Activated B cell treated with CpG ODN at 0.5 μM for 24 hours (primary cell): ENCODE measurements at regions of chr10 and their contacts with region 1.

Region 1: GRCh38 chr10:110203500-110204455 is 3.6 kb upstream of the MXI1 start:
- DNase-seq: no peak
- ATAC-seq: no peak
- H3K4me3 Mint-ChIP-seq: no peak overlapping the region
- H3K27ac Mint-ChIP-seq: no peak overlapping the region
- H3K4me1 Mint-ChIP-seq: peaks cover 11% of the 10 kb centered on the region
- H3K27me3 Mint-ChIP-seq: peaks cover 16% of the 10 kb centered on the region
- CTCF ChIP-seq: no peak

Region 2: GRCh38 chr10:109933984-109934565 is 269.7 kb before region 1 on chr10:
- CTCF ChIA-PET with region 1: no interaction called
- POLR2A ChIA-PET with region 1: interaction called, 11 read pairs
- intact Hi-C with region 1: no loop called
- DNase-seq: no peak
- ATAC-seq: no peak
- H3K4me3 Mint-ChIP-seq: no peak overlapping the region
- H3K27ac Mint-ChIP-seq: no peak overlapping the region
- H3K4me1 Mint-ChIP-seq: no peaks in the 10 kb centered on the region
- H3K27me3 Mint-ChIP-seq: peaks cover 12% of the 10 kb centered on the region
- CTCF ChIP-seq: no peak